Activated naive CD4-positive, alpha-beta T cell treated with anti-CD3 and anti-CD28 coated beads for 36 hours (primary cell): ENCODE measurements at regions of chr3 and their contacts with region 1.

Region 1: DNA sequence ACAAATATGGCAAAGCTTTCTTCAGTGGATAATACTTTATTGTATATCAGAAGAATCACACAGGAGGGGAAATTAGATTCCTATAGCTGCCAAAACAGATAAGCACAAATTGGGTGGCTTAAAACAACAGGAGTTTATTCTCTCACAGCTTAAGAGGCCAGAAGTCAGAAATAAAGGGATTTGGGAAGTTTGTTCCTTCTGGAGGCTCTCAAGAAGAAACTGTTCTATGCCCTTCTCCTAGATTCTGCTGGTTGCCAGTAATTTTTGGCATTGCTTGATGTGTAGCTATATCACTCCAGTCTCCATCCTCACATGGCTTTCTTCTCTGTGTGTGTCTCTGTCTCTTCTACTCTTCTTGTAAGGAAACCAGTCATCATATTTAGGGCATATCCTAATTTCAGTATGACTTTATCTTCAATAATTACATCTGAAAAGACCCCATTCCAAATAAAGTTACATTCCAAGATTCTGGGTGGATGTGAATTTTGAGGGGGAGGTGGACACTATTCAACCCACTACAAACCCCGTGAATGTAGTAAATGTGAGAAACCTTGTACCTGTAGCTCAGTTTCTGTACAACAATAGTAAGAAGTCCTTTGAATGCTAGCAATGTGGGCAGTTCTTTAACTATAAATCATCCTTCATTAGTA is 22.2 kb upstream of the WNT7A start:
- DNase-seq: no peak
- H3K4me3 Mint-ChIP-seq: no peak overlapping the region
- H3K27ac Mint-ChIP-seq: no peak overlapping the region
- H3K4me1 Mint-ChIP-seq: no peaks in the 10 kb centered on the region
- H3K27me3 Mint-ChIP-seq: no peaks in the 10 kb centered on the region

Region 2: DNA sequence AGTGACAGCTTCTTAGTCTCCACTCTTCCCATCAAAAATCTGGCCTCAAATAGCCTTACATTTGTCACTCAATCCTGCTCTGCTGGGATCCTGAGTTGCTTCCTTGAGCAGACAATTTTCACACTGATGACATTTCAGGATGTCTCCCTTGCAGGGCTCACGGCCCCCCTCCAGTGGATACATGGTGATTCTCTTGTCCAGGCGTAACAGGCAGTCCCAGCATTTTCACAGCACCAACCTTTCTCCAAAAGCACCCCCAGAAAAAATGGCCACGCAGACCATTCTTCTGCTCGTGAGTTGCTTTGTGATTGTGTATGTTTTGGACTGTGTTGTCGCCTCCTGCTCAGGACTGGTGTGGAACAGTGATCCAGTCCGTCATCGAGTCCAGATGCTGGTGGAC is 25.2 kb after region 1 on chr3:
- CTCF ChIA-PET with region 1: interaction called, 11 read pairs
- intact Hi-C with region 1: no loop called
- DNase-seq: no peak
- H3K4me3 Mint-ChIP-seq: no peak overlapping the region
- H3K27ac Mint-ChIP-seq: no peak overlapping the region
- H3K4me1 Mint-ChIP-seq: no peaks in the 10 kb centered on the region
- H3K27me3 Mint-ChIP-seq: peaks cover 8% of the 10 kb centered on the region